ENCODE measurements at regions of chr3 and their contacts with region 1.

Region 1: GRCh38 chr3:129383292-129383860 is 45.1 kb downstream of the EFCAB12 start:
- DNase-seq: peak; percentile 49 to 66
- H3K4me3 ChIP-seq: no peak overlapping the region
- H3K27ac ChIP-seq: no peak overlapping the region
- H3K4me1 ChIP-seq: peaks cover 6% of the 10 kb centered on the region
- H3K27me3 ChIP-seq: no peaks in the 10 kb centered on the region
- CTCF ChIP-seq: peak; percentile 85

Region 2: DNA sequence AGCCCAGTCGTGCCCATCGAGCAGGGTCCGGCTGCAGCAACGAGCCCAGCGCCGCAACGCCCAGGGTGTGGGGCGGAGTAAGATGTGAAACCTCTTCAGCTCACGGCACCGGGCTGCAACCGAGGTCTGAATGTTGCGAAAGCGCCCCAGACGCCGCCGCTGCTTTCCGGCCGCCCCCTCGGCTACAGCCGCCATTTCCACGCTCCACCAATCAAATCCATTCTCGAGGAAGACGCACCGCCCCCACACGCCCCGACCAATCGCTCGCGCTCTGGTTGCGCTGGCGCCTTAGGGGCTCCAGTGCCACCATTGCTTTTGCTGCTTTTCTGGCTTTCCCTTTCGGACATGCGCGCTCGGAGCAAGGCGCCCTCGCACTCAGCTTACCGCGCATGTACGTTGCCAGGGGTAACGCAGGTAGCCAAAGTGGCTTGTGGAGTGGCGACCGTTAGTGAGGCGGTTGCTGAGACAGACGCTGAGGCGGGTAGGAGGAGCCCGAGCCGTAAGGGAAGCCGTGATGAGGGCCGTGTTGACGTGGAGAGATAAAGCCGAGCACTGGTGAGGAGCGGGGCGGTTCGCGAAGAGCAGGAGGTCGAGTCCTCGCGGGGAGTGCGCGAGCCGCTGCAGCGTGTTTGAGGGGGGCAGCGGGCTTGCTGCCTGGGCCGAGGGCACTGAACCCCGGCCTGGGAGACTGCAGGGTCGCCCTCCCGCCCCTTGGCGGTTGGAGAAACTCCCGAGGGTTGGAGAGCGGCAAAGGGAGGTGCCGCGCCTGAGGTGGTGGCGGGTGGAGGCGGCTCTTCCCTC is 56.6 kb after region 1 on chr3 and contains the starts of genes IFT122 and MBD4:
- CTCF ChIA-PET with region 1: interaction called, 3 read pairs
- POLR2A ChIA-PET with region 1: interaction called, 3 read pairs
- intact Hi-C with region 1: loop called (anchors 2 kb)
- DNase-seq: peak; percentile 97 to 99
- H3K4me3 ChIP-seq: peak within 1 kb of the TSS; percentile 79
- H3K27ac ChIP-seq: peak within 1 kb of the TSS; percentile 62
- H3K4me1 ChIP-seq: peaks cover 38% of the 10 kb centered on the region
- H3K27me3 ChIP-seq: no peaks in the 10 kb centered on the region
- CTCF ChIP-seq: no peak
- total RNA-seq, gene IFT122: 44.8 and 55.6 TPM in 2 replicates
- total RNA-seq, gene MBD4: 48.6 and 49.4 TPM in 2 replicates

Region 3: GRCh38 chr3:129474984-129475804 is 91.8 kb after region 1 on chr3:
- CTCF ChIA-PET with region 1: interaction called, 14 read pairs
- POLR2A ChIA-PET with region 1: no interaction called
- intact Hi-C with region 1: no loop called
- DNase-seq: no peak
- H3K4me3 ChIP-seq: no peak overlapping the region
- H3K27ac ChIP-seq: no peak overlapping the region
- H3K4me1 ChIP-seq: no peaks in the 10 kb centered on the region
- H3K27me3 ChIP-seq: no peaks in the 10 kb centered on the region
- CTCF ChIP-seq: no peak

Measured in PC-9 (cell line).